ENCODE measurements at regions of chr21 and their contacts with region 1.

Region 1: DNA sequence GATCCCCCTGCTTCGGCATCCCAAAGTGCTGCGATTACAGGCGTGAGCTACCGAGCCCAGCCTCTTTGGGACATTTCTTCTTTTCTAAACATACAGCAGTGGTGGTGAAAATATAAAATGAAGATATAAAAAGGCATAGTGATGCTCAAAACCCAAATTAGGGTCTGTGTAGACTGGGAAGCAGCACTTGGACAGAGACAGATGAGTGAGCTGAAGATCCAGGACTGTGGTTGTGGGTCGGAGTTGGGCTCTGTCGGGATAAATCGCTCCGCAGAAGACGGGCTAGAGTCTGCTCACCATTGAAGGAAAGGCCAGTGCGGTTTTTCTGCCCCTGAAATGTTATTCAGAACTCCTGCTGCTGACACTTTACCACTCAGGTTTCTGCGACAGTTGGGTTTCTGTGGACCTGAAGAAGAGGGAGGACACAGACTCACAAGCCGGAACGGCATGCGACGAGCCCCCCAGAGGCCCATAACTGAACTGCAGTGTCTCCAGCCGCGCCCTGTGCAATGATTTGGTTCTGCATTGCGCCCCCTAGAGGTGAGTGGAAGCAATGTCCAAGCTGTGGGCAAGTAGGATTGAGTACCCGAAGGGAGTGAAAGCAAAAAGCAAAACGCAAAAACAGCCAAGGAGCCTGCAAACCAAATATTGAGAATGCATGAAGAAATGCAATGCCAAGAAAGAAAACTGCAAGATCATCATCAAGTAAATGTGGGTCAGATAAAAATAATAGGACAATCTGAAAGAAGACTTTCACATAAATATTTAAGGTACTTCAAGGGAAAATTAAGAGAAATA is 66.6 kb downstream of the GABPA start:
- DNase-seq: peak; percentile 93
- ATAC-seq: peak; percentile 100
- H3K4me3 Mint-ChIP-seq: peak overlapping the region; percentile 22
- H3K27ac Mint-ChIP-seq: no peak overlapping the region
- H3K4me1 Mint-ChIP-seq: peaks cover 7% of the 10 kb centered on the region
- H3K27me3 Mint-ChIP-seq: peaks cover 26% of the 10 kb centered on the region

Region 2: GRCh38 chr21:25734904-25735645 is 66.3 kb before region 1 on chr21 and contains the starts of genes ATP5PF and GABPA:
- CTCF ChIA-PET with region 1: interaction called, 11 read pairs
- POLR2A ChIA-PET with region 1: interaction called, 5 read pairs
- DNase-seq: peak; percentile 98
- ATAC-seq: peak; percentile 93
- H3K4me3 Mint-ChIP-seq: peak within 1 kb of the TSS; percentile 99
- H3K27ac Mint-ChIP-seq: peak within 1 kb of the TSS; percentile 100
- H3K4me1 Mint-ChIP-seq: peaks cover 29% of the 10 kb centered on the region
- H3K27me3 Mint-ChIP-seq: no peaks in the 10 kb centered on the region
- total RNA-seq, gene ATP5PF: 148 to 150 TPM
- total RNA-seq, gene GABPA: 21.3 to 26.9 TPM

Region 3: GRCh38 chr21:25750085-25750484 is 51.3 kb before region 1 on chr21:
- CTCF ChIA-PET with region 1: interaction called, 14 read pairs
- POLR2A ChIA-PET with region 1: no interaction called
- DNase-seq: peak; percentile 66
- ATAC-seq: peak; percentile 81
- H3K4me3 Mint-ChIP-seq: no peak overlapping the region
- H3K27ac Mint-ChIP-seq: peak overlapping the region; percentile 83
- H3K4me1 Mint-ChIP-seq: peaks cover 13% of the 10 kb centered on the region
- H3K27me3 Mint-ChIP-seq: no peaks in the 10 kb centered on the region

Region 4: DNA sequence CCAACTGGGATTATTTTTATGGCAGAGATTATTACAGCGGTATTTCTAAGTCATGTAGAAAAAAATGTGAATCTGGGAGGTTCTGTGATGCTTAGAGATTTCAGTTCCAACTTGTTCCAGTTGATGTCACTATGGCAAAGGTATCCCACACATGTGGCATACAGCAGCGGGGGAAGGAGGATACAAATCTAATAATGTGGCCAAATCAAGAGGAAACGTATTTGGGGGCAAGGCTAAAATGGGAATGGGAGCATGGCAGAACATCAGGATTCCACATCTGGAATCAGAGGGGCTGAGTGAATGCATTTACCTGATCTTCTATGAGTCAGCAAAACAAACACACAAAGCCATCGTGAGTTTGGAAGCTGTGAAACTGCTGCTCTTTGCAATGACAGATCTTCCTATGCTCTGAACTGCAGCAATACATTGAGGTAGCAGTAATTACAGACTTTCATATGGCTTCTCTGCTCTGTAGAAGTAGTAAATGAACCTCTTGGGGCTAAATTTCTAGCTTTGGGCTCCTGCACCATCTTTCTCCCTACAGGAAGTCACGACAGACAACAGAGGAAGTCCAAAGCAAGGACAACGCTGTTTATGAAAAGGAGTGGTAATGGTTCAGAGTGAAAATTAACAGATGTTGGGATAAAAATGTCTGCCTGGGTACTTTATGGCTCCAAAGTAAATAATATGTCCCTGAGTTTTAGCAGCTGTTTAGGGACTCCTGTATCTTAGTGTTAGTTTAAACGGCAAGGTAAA is 11.1 kb before region 1 on chr21:
- CTCF ChIA-PET with region 1: interaction called, 25 read pairs
- POLR2A ChIA-PET with region 1: interaction called, 3 read pairs
- DNase-seq: no peak
- ATAC-seq: peak; percentile 53
- H3K4me3 Mint-ChIP-seq: peak overlapping the region; percentile 25
- H3K27ac Mint-ChIP-seq: peak overlapping the region; percentile 40
- H3K4me1 Mint-ChIP-seq: peaks cover 10% of the 10 kb centered on the region
- H3K27me3 Mint-ChIP-seq: peaks cover 12% of the 10 kb centered on the region

Region 5: GRCh38 chr21:25813917-25814316 is 12.5 kb after region 1 on chr21:
- CTCF ChIA-PET with region 1: interaction called, 11 read pairs
- POLR2A ChIA-PET with region 1: no interaction called
- DNase-seq: no peak
- ATAC-seq: no peak
- H3K4me3 Mint-ChIP-seq: no peak overlapping the region
- H3K27ac Mint-ChIP-seq: no peak overlapping the region
- H3K4me1 Mint-ChIP-seq: no peaks in the 10 kb centered on the region
- H3K27me3 Mint-ChIP-seq: peaks cover 2% of the 10 kb centered on the region

Region 6: GRCh38 chr21:26070822-26071425 is 269.5 kb after region 1 on chr21:
- CTCF ChIA-PET with region 1: no interaction called
- POLR2A ChIA-PET with region 1: no interaction called
- DNase-seq: peak; percentile 49
- ATAC-seq: peak; percentile 86
- H3K4me3 Mint-ChIP-seq: peak overlapping the region; percentile 65
- H3K27ac Mint-ChIP-seq: peak overlapping the region; percentile 77
- H3K4me1 Mint-ChIP-seq: peaks cover 36% of the 10 kb centered on the region
- H3K27me3 Mint-ChIP-seq: no peaks in the 10 kb centered on the region

Region 7: GRCh38 chr21:26099610-26100219 is 298.3 kb after region 1 on chr21:
- CTCF ChIA-PET with region 1: no interaction called
- POLR2A ChIA-PET with region 1: no interaction called
- DNase-seq: no peak
- ATAC-seq: no peak
- H3K4me3 Mint-ChIP-seq: no peak overlapping the region
- H3K27ac Mint-ChIP-seq: no peak overlapping the region
- H3K4me1 Mint-ChIP-seq: no peaks in the 10 kb centered on the region
- H3K27me3 Mint-ChIP-seq: no peaks in the 10 kb centered on the region

Measured in activated CD8-positive, alpha-beta T cell treated with anti-CD3 and anti-CD28 coated beads, Interleukin-2, amount 10 ng/mL, durations not matched to agents 7 days and 5 days (primary cell).